ENCODE measurements at regions of chr12 and their contacts with region 1.

Region 1: GRCh38 chr12:41577995-41578394 is 389.9 kb downstream of the PDZRN4 start:
- DNase-seq: no peak
- ATAC-seq: no peak
- H3K4me3 ChIP-seq: no peak overlapping the region
- H3K27ac ChIP-seq: no peak overlapping the region
- H3K4me1 ChIP-seq: no peaks in the 10 kb centered on the region
- H3K27me3 ChIP-seq: no peaks in the 10 kb centered on the region
- CTCF ChIP-seq: no peak

Region 2: DNA sequence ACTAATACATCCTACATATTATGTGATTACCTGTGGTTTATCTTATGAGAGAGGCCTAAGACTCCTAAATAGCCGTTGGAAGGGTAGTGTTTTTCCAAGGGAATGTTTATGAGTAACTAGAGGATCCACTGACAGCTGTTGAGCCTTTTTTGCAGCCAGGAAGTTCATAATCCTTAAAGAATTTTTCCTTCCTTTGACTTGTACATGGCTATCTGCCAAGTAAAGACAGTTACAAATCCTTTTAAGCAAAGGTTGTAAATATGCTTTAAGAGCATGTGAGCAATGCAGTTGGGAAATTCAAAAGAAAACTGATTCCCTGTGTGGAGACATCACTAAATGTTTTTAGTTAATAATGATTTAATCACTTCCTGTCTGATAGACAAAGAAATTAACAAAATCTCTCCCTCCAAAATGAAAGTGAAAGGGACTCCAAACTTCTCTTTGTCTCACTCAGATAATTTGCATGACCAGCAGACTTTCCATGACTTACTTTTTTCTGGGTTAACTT is 56.1 kb before region 1 on chr12:
- intact Hi-C with region 1: loop called in 1 of 10 experiments (anchors 2 kb)
- DNase-seq: no peak
- ATAC-seq: peak in 7 of 8 donors; percentile 29 to 90 (median 71)
- H3K4me3 ChIP-seq: peak overlapping the region in 6 of 10 donors; percentile 8 to 25 (median 16)
- H3K27ac ChIP-seq: peak overlapping the region; percentile 3 to 69 (median 50)
- H3K4me1 ChIP-seq: peaks cover 0 to 15% (median 6%) of the 10 kb centered on the region in 9 donors
- H3K27me3 ChIP-seq: no peaks in the 10 kb centered on the region
- CTCF ChIP-seq: no peak